ENCODE measurements at regions of chr17 and their contacts with region 1.

Region 1: GRCh38 chr17:54172096-54172984 is 349.6 kb downstream of the KIF2B start:
- DNase-seq: no peak
- ATAC-seq: no peak
- H3K4me3 ChIP-seq: no peak overlapping the region
- H3K27ac ChIP-seq: no peak overlapping the region
- H3K4me1 ChIP-seq: no peaks in the 10 kb centered on the region
- H3K27me3 ChIP-seq: no peaks in the 10 kb centered on the region
- CTCF ChIP-seq: peak; percentile 62

Region 2: GRCh38 chr17:53032861-53033271 is 1139.5 kb before region 1 on chr17:
- intact Hi-C with region 1: loop called in 1 of 2 experiments (anchors 10 kb)
- DNase-seq: no peak
- ATAC-seq: peak; percentile 56 to 80 (median 66)
- H3K4me3 ChIP-seq: no peak overlapping the region
- H3K27ac ChIP-seq: no peak overlapping the region
- H3K4me1 ChIP-seq: no peaks in the 10 kb centered on the region
- H3K27me3 ChIP-seq: no peaks in the 10 kb centered on the region
- CTCF ChIP-seq: peak; percentile 62

Region 3: DNA sequence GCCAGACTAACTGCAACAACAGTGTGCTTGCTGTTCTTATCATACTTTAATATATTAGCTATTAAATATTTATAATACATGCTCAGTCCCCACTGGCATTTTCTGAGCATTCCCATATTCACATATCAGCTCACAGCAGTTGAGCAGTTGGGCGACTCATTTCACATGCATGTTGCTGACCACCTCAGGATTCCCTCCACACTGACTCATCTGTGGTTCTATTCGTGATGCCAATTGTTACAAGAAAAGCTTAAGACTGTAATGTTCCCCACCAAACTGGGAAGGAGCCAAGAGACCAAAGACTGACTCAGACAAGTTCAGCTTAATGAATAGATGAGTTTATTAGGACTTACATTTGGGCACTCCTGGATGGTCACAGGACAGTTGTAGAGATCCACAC is 449.9 kb before region 1 on chr17:
- intact Hi-C with region 1: no loop called
- DNase-seq: no peak
- ATAC-seq: peak in 2 of 4 donors; percentile 43 to 61
- H3K4me3 ChIP-seq: no peak overlapping the region
- H3K27ac ChIP-seq: no peak overlapping the region
- H3K4me1 ChIP-seq: no peaks in the 10 kb centered on the region
- H3K27me3 ChIP-seq: no peaks in the 10 kb centered on the region
- CTCF ChIP-seq: no peak

Region 4: DNA sequence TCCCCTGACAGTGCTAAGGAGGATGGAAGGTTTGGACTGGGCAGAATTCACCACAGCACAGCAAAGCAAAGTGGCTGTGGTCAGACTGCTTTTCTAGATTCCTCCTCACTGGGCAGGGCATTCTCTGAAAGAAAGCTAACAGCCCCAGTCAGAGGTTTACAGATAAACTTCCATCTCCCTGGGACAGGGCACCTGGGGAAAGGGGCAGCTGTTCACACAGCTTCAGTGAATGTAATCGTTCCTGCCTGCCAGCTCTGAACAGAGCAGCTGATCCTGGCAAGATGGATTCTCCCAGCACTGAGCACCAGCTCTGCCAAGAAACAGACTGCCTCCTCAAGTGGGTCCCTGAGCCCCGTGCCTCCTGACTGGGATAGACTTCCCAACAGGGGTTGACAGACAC is 392.0 kb before region 1 on chr17:
- intact Hi-C with region 1: loop called in 1 of 2 experiments (anchors 10 kb)
- DNase-seq: no peak
- ATAC-seq: no peak
- H3K4me3 ChIP-seq: no peak overlapping the region
- H3K27ac ChIP-seq: no peak overlapping the region
- H3K4me1 ChIP-seq: no peaks in the 10 kb centered on the region
- H3K27me3 ChIP-seq: no peaks in the 10 kb centered on the region
- CTCF ChIP-seq: no peak

Region 5: DNA sequence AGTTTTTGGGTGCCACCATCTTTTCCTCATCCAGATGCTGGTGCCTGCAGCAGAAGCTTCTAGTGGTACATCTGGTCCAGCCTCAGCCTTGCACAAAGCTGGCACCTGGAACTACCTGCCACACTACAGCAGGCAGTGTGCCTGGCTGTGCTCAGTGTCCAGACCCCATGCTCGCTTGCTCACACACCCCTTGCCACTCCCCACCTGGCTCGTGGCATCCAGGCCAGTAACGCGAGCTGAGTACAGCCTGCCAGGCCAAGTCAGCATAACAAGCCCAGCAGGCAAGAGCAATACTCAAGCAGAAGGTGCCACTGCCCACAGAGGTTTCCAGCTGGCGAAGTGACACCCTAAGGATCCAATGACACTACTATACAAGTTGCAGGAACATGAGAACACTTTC is 379.3 kb before region 1 on chr17:
- intact Hi-C with region 1: loop called (anchors 2 to 10 kb)
- DNase-seq: peak; percentile 55 to 82
- ATAC-seq: peak; percentile 90 to 93 (median 92)
- H3K4me3 ChIP-seq: peak overlapping the region; percentile 12
- H3K27ac ChIP-seq: peak overlapping the region; percentile 86
- H3K4me1 ChIP-seq: peaks cover 27% of the 10 kb centered on the region
- H3K27me3 ChIP-seq: no peaks in the 10 kb centered on the region
- CTCF ChIP-seq: no peak

Region 6: DNA sequence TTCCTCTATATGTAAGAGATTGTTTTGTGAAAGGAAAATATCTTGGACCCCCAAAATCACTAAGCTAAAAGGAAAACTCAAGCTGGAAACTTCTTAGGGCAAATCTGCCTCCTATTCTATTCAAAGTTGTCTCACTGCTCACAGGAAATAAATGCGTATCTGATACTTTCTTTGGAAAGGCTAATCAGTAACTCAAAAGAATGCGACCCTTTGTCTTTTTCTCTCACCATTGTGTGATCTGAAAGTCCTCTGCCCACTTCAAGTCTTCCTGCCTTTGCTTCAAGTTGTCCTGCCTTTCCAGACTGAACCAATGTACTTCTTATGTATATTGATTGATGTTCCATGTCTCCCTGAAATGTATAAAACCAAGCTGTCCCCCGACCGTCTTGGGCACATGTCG is 192.3 kb before region 1 on chr17:
- intact Hi-C with region 1: no loop called
- DNase-seq: no peak
- ATAC-seq: no peak
- H3K4me3 ChIP-seq: no peak overlapping the region
- H3K27ac ChIP-seq: no peak overlapping the region
- H3K4me1 ChIP-seq: no peaks in the 10 kb centered on the region
- H3K27me3 ChIP-seq: no peaks in the 10 kb centered on the region
- CTCF ChIP-seq: no peak